MCF 10A (cell line): ENCODE measurements at regions of chr3 and their contacts with region 1.

Region 1: GRCh38 chr3:192816351-192816750 is 89.0 kb upstream of the FGF12 start:
- DNase-seq: peak; percentile 65
- H3K4me3 Mint-ChIP-seq: no peak overlapping the region
- H3K27ac Mint-ChIP-seq: no peak overlapping the region
- H3K4me1 Mint-ChIP-seq: peaks cover 35% of the 10 kb centered on the region
- H3K27me3 Mint-ChIP-seq: no peaks in the 10 kb centered on the region
- CTCF ChIP-seq: peak; percentile 64

Region 2: DNA sequence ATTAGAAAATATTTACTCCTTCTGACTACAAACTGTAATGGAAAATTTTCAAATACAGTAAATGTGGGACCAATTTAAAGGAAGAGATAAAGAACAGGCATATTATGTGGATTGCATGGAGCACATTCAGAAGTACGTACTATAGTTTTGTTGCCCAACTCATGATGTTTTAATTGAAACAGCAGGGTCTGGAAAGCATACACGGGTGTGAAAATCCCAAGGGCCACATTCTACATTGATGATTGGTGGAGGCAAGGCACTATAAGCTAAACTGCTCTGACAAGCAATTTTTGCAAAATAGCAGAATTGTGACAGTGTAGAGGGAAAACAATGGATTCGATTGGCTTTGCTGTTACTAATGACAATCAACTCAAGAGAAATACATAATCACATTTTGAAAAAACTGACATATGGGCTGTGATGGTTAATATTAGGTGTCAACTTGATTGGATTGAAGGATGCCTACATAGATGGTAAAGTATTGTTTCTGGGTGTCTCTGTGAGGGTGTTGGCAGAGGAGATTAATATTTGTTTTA is 896.8 kb before region 1 on chr3:
- CTCF ChIA-PET with region 1: no interaction called
- POLR2A ChIA-PET with region 1: no interaction called
- intact Hi-C with region 1: no loop called
- DNase-seq: no peak
- H3K4me3 Mint-ChIP-seq: no peak overlapping the region
- H3K27ac Mint-ChIP-seq: no peak overlapping the region
- H3K4me1 Mint-ChIP-seq: no peaks in the 10 kb centered on the region
- H3K27me3 Mint-ChIP-seq: no peaks in the 10 kb centered on the region
- CTCF ChIP-seq: no peak

Region 3: DNA sequence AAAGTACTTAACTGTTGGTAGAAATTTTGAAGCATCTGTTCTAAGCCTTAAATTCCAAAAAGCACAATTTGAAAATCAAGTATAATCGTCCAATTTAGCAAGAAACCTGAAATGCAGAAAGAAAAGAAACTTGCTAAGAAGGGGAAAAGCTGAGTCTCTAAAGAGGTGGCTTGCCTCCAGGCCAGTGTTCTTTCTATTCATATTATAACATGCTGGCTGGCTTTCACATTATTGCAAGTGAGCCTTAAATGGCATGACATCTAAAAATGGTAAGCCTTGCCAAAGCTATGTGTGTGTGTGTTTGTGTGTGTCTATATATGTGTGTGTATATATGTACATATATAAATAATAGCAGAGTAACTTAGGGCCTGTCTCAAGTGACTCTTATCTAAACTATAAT is 178.5 kb before region 1 on chr3:
- CTCF ChIA-PET with region 1: no interaction called
- POLR2A ChIA-PET with region 1: no interaction called
- intact Hi-C with region 1: no loop called
- DNase-seq: no peak
- H3K4me3 Mint-ChIP-seq: no peak overlapping the region
- H3K27ac Mint-ChIP-seq: no peak overlapping the region
- H3K4me1 Mint-ChIP-seq: no peaks in the 10 kb centered on the region
- H3K27me3 Mint-ChIP-seq: peaks cover 85% of the 10 kb centered on the region
- CTCF ChIP-seq: no peak

Region 4: DNA sequence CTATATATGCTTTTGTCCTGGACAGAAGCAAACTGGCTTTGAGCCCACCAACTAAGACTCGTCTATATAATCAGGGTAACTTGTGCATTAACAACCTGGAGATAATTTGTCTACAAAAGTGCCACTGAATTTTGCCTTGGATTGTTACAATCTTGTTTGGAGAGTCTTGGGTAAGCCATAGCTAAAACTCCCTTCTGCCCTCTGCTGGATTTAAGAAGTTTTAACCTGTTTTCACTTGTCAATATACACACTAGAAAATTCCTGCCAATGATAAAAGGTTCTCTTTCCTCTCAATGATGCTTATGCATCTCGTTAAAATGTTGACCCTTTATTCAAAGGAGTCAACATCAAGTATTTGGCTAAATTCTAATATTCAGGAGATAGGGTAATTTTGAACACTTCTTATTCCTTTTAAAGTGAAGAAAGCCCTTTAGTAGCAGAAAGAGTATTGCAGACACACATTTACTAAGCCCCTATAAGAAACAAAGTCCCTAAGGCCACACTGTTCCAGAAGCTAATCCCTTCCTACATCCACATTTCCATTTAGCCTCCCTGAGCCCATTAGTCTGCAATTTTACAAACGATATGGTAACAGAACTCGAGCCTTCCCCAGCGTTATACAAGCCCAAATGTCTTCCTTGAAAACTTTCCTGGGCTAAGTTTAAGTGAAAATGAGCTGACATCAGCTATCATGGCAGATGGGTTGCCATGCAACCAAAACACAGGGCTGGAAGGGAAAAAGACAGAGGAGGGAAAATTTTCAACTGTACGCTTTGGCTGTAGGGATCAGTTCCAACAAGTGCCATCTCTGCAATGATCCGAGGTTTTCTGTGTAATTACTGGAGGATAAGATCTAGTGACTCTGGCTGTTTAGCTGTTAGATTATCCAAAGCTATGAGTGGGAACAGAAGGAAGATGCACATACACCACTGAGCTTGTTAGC is 13.1 kb before region 1 on chr3:
- CTCF ChIA-PET with region 1: interaction called, 44 read pairs
- POLR2A ChIA-PET with region 1: no interaction called
- intact Hi-C with region 1: no loop called
- DNase-seq: peak; percentile 49
- H3K4me3 Mint-ChIP-seq: no peak overlapping the region
- H3K27ac Mint-ChIP-seq: no peak overlapping the region
- H3K4me1 Mint-ChIP-seq: no peaks in the 10 kb centered on the region
- H3K27me3 Mint-ChIP-seq: no peaks in the 10 kb centered on the region
- CTCF ChIP-seq: peak; percentile 44

Region 5: DNA sequence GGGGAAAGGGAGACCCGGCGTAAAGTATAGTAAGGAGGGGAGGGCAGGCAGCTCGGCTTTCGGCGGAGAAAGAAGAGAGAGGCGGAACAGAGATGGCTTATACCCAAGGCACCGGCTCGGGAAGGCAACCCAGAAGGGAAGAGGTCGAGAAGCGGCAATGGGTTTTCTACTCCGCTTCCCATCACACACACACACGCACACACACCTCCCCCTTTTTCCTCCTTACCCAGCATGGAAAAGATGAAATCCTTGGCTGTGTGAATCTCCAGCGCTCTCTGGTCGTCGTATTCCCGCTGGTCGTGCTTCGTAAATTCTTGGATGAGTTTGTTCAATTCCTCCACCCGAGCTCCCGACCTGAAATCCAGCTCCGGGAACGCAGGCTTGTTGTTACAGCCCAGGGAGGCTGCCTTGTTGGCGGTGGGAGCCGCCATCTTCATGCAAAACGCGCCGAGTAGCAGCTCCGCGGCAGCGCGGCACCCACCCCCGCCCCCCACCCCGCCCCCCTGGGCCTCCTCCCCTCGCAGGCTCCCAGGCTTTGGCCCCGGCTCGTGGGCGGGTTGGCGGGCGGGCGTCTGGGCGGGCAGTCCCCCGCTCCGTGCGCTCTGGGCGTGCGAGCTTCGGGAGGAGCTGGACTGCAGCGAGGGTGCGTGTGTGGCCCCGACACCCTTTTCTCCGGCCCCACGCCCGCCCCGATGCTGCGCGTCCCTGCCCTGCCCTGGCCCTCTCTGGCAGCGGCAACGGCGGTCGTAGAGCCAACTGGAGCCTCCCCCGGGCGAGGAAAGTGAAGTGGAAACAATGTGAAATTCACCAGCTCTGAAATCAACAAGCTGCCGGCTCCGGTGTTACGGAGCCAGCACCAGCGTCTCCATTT is 101.3 kb after region 1 on chr3 and contains the start of gene MB21D2:
- CTCF ChIA-PET with region 1: interaction called, 49 read pairs
- POLR2A ChIA-PET with region 1: interaction called, 4 read pairs
- intact Hi-C with region 1: loop called (anchors 1 kb)
- DNase-seq: peak; percentile 72
- H3K4me3 Mint-ChIP-seq: peak within 1 kb of the TSS; percentile 85
- H3K27ac Mint-ChIP-seq: peak within 1 kb of the TSS; percentile 35
- H3K4me1 Mint-ChIP-seq: peaks cover 22% of the 10 kb centered on the region
- H3K27me3 Mint-ChIP-seq: no peaks in the 10 kb centered on the region
- CTCF ChIP-seq: no peak
- total RNA-seq, gene MB21D2: 3.6 and 4.4 TPM in 2 replicates

Region 6: DNA sequence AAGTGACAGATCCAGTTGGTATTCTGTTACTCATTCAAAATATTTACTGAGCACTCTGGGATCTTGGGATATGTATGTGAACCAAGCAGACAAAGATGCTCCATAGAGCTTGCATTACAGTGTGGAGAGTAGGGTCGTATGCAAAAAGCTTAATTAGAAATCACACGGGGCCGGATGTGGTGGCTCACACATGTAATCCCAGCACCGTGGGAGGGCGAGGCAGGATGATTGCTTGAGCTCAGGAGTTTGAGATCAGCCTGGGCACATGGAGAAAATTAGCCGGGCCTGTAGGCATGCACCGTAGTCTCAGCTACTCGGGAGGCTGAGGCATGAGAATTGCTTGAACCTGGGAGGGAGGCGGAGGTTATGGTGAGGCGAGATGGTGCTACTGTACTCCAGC is 170.0 kb after region 1 on chr3:
- CTCF ChIA-PET with region 1: no interaction called
- POLR2A ChIA-PET with region 1: no interaction called
- intact Hi-C with region 1: no loop called
- DNase-seq: no peak
- H3K4me3 Mint-ChIP-seq: no peak overlapping the region
- H3K27ac Mint-ChIP-seq: no peak overlapping the region
- H3K4me1 Mint-ChIP-seq: no peaks in the 10 kb centered on the region
- H3K27me3 Mint-ChIP-seq: no peaks in the 10 kb centered on the region
- CTCF ChIP-seq: no peak

Region 7: GRCh38 chr3:193033381-193033780 is 217.0 kb after region 1 on chr3:
- CTCF ChIA-PET with region 1: interaction called, 489 read pairs
- POLR2A ChIA-PET with region 1: interaction called, 3 read pairs
- intact Hi-C with region 1: no loop called
- DNase-seq: no peak
- H3K4me3 Mint-ChIP-seq: no peak overlapping the region
- H3K27ac Mint-ChIP-seq: no peak overlapping the region
- H3K4me1 Mint-ChIP-seq: no peaks in the 10 kb centered on the region
- H3K27me3 Mint-ChIP-seq: no peaks in the 10 kb centered on the region
- CTCF ChIP-seq: no peak

Region 8: GRCh38 chr3:193190146-193190786 is 373.9 kb after region 1 on chr3:
- CTCF ChIA-PET with region 1: interaction called, 4 read pairs
- POLR2A ChIA-PET with region 1: no interaction called
- intact Hi-C with region 1: loop called (anchors 2 kb)
- DNase-seq: peak; percentile 56
- H3K4me3 Mint-ChIP-seq: no peak overlapping the region
- H3K27ac Mint-ChIP-seq: no peak overlapping the region
- H3K4me1 Mint-ChIP-seq: no peaks in the 10 kb centered on the region
- H3K27me3 Mint-ChIP-seq: peaks cover 66% of the 10 kb centered on the region
- CTCF ChIP-seq: peak; percentile 32

Region 9: DNA sequence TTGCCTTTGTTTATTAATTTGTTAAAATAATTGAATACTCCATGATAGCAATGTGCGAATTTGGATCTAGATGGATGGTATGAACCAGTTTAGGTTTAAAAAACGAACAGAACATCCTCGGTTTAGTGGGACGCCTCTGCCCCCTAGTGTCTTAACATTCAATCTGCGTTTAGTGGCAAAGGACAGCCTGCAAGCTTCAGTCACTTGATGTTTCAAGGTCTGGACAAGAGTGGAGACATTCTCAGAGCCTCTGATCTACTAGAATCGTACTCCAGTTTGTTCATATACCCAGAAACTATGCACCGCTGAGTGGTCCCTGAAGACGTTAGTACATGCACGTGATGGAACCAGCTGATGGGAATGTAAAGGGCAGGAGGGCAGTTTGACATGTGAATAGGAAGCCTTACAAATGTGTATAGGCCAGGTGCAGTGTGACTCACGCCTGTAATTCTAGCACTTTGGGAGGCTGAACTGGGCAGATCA is 756.1 kb after region 1 on chr3:
- CTCF ChIA-PET with region 1: interaction called, 159 read pairs
- POLR2A ChIA-PET with region 1: interaction called, 3 read pairs
- intact Hi-C with region 1: loop called (anchors 1 kb)
- DNase-seq: peak; percentile 80
- H3K4me3 Mint-ChIP-seq: no peak overlapping the region
- H3K27ac Mint-ChIP-seq: no peak overlapping the region
- H3K4me1 Mint-ChIP-seq: peaks cover 10% of the 10 kb centered on the region
- H3K27me3 Mint-ChIP-seq: peaks cover 13% of the 10 kb centered on the region
- CTCF ChIP-seq: peak; percentile 78